ENCODE measurements at regions of chr11 and their contacts with region 1.

Region 1: GRCh38 chr11:107858217-107859070 is at the start of gene SLC35F2:
- DNase-seq: peak; percentile 62
- H3K4me3 Mint-ChIP-seq: peak within 1 kb of the TSS; percentile 95
- H3K27ac Mint-ChIP-seq: peak within 1 kb of the TSS; percentile 83
- H3K4me1 Mint-ChIP-seq: peaks cover 26% of the 10 kb centered on the region
- H3K27me3 Mint-ChIP-seq: peaks cover 8% of the 10 kb centered on the region
- total RNA-seq, gene SLC35F2: 36.5 and 38.0 TPM in 2 replicates

Region 2: GRCh38 chr11:107457558-107458271 is 400.7 kb before region 1 on chr11 and contains the start of gene CWF19L2:
- intact Hi-C with region 1: loop called (anchors 1 kb)
- DNase-seq: peak; percentile 88
- H3K4me3 Mint-ChIP-seq: peak within 1 kb of the TSS; percentile 91
- H3K27ac Mint-ChIP-seq: peak within 1 kb of the TSS; percentile 87
- H3K4me1 Mint-ChIP-seq: peaks cover 28% of the 10 kb centered on the region
- H3K27me3 Mint-ChIP-seq: peaks cover 9% of the 10 kb centered on the region
- total RNA-seq, gene CWF19L2: 16.5 and 16.7 TPM in 2 replicates

Region 3: GRCh38 chr11:107741044-107741823 is 117.2 kb before region 1 on chr11:
- intact Hi-C with region 1: loop called (anchors 1 kb)
- DNase-seq: no peak
- H3K4me3 Mint-ChIP-seq: no peak overlapping the region
- H3K27ac Mint-ChIP-seq: no peak overlapping the region
- H3K4me1 Mint-ChIP-seq: no peaks in the 10 kb centered on the region
- H3K27me3 Mint-ChIP-seq: peaks cover 5% of the 10 kb centered on the region

Region 4: DNA sequence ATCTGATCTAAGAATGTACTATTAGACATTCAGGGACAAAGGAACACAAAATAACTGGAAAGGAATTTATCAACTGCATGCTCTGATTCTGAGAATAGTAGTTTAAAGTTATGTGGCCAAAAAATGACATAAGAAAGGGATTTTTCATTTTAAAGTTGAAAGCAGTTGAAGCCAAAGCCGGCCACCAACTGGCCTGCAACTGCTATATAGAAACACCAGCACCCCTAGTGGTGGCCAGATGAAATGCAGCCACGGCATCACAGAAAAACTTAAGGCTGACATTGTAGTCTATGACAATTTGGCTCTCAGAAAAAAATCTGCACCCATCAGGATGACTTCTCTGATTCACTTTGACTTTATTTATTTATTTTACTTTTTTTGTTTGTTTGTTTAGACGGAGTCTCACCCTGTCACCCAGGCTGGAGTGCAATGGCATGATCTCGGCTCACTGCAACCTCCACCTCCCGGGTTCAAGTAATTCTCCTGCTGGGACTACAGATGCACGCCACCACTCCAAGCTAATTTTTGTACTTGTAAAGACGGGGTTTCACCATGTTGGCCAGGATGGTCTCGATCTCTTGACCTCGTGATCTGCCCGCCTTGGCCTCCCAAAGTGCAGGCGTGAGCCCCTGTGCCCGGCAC is 59.1 kb before region 1 on chr11:
- intact Hi-C with region 1: loop called (anchors 1 kb)
- DNase-seq: peak; percentile 44
- H3K4me3 Mint-ChIP-seq: no peak overlapping the region
- H3K27ac Mint-ChIP-seq: no peak overlapping the region
- H3K4me1 Mint-ChIP-seq: no peaks in the 10 kb centered on the region
- H3K27me3 Mint-ChIP-seq: no peaks in the 10 kb centered on the region

Region 5: GRCh38 chr11:107821199-107821927 is 37.1 kb before region 1 on chr11:
- intact Hi-C with region 1: no loop called
- DNase-seq: no peak
- H3K4me3 Mint-ChIP-seq: no peak overlapping the region
- H3K27ac Mint-ChIP-seq: no peak overlapping the region
- H3K4me1 Mint-ChIP-seq: peaks cover 10% of the 10 kb centered on the region
- H3K27me3 Mint-ChIP-seq: no peaks in the 10 kb centered on the region

Region 6: DNA sequence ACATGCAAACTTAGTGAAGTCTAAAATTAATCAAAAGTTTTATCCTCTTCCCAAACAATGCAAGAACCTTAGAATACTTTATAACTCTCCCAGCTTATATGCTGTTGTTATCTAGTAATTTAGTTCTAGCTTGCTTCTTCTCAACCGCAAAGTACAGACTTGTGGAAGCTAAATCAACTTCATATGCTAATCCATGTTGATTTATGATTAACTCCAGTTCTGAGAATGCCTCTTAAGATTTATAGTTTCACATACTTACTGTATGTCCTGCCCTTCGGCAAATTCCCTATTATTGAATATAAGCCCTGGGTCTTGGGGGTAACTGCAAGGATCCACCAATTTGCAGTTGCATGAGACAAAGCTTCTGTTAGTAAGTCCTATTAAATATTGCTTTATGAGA is 17.7 kb after region 1 on chr11:
- intact Hi-C with region 1: no loop called
- DNase-seq: no peak
- H3K4me3 Mint-ChIP-seq: no peak overlapping the region
- H3K27ac Mint-ChIP-seq: no peak overlapping the region
- H3K4me1 Mint-ChIP-seq: no peaks in the 10 kb centered on the region
- H3K27me3 Mint-ChIP-seq: no peaks in the 10 kb centered on the region

Region 7: DNA sequence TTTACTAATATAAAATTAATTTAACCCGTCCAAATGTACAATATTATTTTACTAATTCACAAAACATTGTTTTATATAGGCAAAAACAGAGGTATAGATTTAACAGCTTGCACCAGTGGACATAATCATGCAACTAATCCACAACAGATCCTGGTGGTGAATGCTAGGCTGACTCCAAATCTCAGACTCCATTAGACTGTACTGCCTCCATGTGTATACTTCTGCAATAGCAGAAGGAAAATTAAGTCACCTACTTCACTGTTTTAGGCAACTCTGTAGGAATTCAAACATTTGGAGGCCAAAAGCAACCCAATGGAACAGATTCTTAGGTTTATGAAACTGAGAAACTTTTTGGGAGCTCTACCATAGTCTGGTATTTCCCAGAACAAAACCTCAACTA is 39.8 kb after region 1 on chr11:
- intact Hi-C with region 1: loop called (anchors 2 kb)
- DNase-seq: no peak
- H3K4me3 Mint-ChIP-seq: no peak overlapping the region
- H3K27ac Mint-ChIP-seq: no peak overlapping the region
- H3K4me1 Mint-ChIP-seq: no peaks in the 10 kb centered on the region
- H3K27me3 Mint-ChIP-seq: peaks cover 4% of the 10 kb centered on the region

Region 8: DNA sequence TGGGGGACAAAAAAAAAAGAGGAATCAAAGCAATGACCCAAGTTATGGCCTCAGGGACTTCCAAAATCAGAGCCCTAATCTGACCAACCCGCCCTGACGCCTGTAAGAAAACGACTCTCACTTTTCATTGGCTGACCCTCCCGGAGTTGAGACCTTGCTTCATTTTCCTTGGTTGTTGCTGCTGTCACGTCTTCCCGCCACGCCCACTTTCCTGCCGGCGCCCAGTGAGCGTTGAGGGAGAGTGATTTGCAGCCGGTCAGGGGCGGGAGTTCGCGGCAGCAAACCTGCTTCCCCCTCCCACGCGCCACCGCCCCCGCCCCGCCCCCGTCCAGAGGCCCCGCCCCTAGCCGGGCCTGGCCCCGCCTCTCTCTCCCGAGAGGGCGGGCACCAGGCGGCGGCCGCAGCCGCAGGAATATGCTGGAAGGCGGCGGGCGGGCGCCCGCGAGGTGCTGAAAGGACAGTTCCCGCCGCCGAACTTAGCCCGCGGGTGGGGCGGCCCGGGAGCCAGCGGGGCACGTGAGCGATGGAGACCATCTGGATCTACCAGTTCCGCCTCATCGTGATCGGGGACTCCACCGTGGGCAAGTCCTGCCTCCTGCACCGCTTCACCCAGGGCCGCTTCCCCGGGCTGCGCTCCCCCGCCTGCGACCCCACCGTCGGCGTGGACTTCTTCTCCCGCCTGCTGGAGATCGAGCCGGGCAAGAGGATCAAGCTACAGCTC is 69.8 kb after region 1 on chr11 and contains the start of gene RAB39A:
- intact Hi-C with region 1: loop called (anchors 1 kb)
- DNase-seq: peak; percentile 71
- H3K4me3 Mint-ChIP-seq: peak within 1 kb of the TSS; percentile 71
- H3K27ac Mint-ChIP-seq: no peak within 1 kb of the TSS
- H3K4me1 Mint-ChIP-seq: peaks cover 6% of the 10 kb centered on the region
- H3K27me3 Mint-ChIP-seq: peaks cover 25% of the 10 kb centered on the region
- total RNA-seq, gene RAB39A: not detected in 2 replicates

Region 9: GRCh38 chr11:108121274-108122155 is 263.1 kb after region 1 on chr11 and contains the start of gene ACAT1:
- intact Hi-C with region 1: loop called (anchors 5 kb)
- DNase-seq: peak; percentile 95
- H3K4me3 Mint-ChIP-seq: peak within 1 kb of the TSS; percentile 97
- H3K27ac Mint-ChIP-seq: peak within 1 kb of the TSS; percentile 82
- H3K4me1 Mint-ChIP-seq: peaks cover 36% of the 10 kb centered on the region
- H3K27me3 Mint-ChIP-seq: no peaks in the 10 kb centered on the region
- total RNA-seq, gene ACAT1: 52.8 and 56.8 TPM in 2 replicates

Measured in activated T-helper 1 cell treated with anti-CD3 and anti-CD28 coated beads, Interleukin-12 subunit alpha, Interleukin-12 subunit beta, Interleukin-2, Interleukin-4 antibody, amounts not matched to agents 30 ng/mL and 10 ng/mL and 1 ng/mL, durations not matched to agents 14 hours and 24 hours and 36 hours (primary cell).